MCF 10A (cell line): ENCODE measurements at regions of chr20 and their contacts with region 1.

Region 1: DNA sequence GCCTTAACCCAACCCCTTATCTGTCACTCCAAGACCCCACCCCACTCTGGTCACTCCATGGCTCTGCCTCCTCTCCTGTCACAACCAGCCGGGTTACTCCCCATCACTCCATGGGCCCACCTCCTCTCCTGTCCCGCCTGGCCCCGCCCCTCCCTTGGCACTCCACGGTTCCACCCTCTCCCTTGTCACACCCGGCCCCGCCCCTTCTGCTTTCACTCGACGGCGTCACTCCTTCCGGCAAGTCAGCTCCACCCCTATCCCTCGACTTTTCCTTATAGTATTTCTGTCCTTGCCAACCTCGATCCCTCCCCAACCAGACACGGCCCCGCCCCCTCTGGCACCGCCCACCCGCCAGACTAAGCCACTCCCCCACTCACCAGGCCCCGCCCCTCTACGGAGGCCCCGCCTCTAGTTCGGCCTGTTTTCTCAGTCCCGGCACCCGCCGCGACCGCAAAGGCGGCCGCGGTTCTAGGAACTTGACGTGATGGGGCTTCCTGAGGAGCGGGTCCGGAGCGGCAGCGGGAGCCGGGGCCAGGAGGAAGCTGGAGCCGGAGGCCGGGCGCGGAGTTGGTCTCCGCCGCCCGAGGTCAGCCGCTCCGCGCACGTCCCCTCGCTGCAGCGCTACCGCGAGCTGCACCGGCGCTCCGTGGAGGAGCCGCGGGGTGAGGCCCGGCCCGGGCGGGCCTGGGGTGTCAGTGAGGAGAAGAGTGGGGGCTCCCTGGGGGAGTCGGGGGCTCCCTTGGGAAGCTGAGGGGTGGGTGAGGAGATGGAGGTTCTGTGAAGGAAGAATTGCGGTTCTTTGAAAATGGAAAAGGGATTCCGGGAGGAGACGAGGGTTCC is at the start of gene ACSS2:
- DNase-seq: peak; percentile 100
- H3K4me3 Mint-ChIP-seq: peak within 1 kb of the TSS; percentile 99
- H3K27ac Mint-ChIP-seq: peak within 1 kb of the TSS; percentile 91
- H3K4me1 Mint-ChIP-seq: peaks cover 51% of the 10 kb centered on the region
- H3K27me3 Mint-ChIP-seq: no peaks in the 10 kb centered on the region
- CTCF ChIP-seq: no peak
- total RNA-seq, gene ACSS2: 36.6 and 42.0 TPM in 2 replicates

Region 2: DNA sequence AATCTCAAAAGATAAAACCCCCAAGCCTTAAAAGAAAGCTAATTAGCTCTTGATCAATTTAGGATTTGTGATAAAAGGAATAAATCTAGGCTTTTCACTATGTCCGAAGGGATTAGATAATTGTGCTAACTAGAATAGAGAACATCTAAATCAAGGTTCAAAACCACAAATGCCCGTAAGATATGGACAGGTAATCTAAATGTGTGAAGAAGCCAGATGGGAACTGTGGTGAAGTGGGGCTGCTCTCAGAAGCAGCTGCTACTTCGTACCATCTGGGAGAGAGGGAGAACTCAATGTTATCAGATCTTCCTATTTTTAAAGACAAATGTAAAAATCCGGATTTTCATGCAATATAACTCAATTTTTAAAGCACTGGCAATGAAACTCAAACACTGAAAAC is 95.2 kb before region 1 on chr20:
- CTCF ChIA-PET with region 1: no interaction called
- POLR2A ChIA-PET with region 1: no interaction called
- intact Hi-C with region 1: no loop called
- DNase-seq: no peak
- H3K4me3 Mint-ChIP-seq: no peak overlapping the region
- H3K27ac Mint-ChIP-seq: no peak overlapping the region
- H3K4me1 Mint-ChIP-seq: no peaks in the 10 kb centered on the region
- H3K27me3 Mint-ChIP-seq: no peaks in the 10 kb centered on the region
- CTCF ChIP-seq: no peak

Region 3: DNA sequence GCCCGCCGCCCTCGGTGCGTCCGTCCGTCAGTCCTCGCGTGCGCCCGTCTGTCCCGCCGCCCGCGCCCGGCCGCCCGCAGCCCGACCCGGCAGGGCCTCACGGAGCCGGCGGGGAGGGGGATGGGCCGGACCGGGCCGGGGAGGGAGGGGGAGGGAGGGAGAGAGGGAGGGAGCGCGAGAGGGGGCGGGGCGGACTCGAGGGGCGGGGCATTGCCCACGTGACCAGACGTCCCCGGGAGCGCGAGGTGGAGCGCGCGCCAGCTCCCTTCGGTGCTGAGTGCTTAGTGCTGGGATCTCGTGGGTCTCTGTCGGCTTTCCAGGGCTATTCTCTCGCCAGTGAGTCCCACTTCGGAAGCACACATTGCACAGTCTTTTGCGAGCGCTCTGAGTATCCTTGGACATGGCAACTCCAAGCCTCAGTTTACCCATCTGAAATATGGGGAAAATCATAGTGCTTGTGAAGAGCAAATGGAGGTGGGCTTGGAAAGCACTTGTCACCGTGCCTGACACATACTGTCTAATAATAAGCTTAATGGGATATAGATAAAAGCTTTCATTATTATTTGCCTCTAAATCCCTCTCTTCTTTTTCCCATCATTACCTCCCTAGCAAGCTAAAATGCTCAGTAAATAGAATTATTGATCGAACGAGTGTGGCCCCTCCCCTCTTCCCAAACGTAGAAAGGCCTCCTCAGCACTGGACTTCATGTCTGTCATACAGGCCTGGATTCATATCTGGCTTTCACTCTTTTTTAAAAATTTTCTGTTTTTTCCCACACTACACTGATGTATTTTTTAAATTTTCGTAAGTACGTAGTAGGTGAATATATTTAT is 50.6 kb before region 1 on chr20 and contains the start of gene NCOA6:
- CTCF ChIA-PET with region 1: interaction called, 4 read pairs
- POLR2A ChIA-PET with region 1: interaction called, 12 read pairs
- intact Hi-C with region 1: no loop called
- DNase-seq: peak; percentile 78
- H3K4me3 Mint-ChIP-seq: peak within 1 kb of the TSS; percentile 97
- H3K27ac Mint-ChIP-seq: peak within 1 kb of the TSS; percentile 88
- H3K4me1 Mint-ChIP-seq: peaks cover 24% of the 10 kb centered on the region
- H3K27me3 Mint-ChIP-seq: peaks cover 22% of the 10 kb centered on the region
- CTCF ChIP-seq: no peak
- total RNA-seq, gene NCOA6: 25.7 and 27.9 TPM in 2 replicates

Region 4: GRCh38 chr20:34861386-34862084 is 14.8 kb before region 1 on chr20:
- CTCF ChIA-PET with region 1: interaction called, 51 read pairs
- POLR2A ChIA-PET with region 1: interaction called, 4 read pairs
- intact Hi-C with region 1: no loop called
- DNase-seq: no peak
- H3K4me3 Mint-ChIP-seq: no peak overlapping the region
- H3K27ac Mint-ChIP-seq: no peak overlapping the region
- H3K4me1 Mint-ChIP-seq: no peaks in the 10 kb centered on the region
- H3K27me3 Mint-ChIP-seq: no peaks in the 10 kb centered on the region
- CTCF ChIP-seq: no peak

Region 5: DNA sequence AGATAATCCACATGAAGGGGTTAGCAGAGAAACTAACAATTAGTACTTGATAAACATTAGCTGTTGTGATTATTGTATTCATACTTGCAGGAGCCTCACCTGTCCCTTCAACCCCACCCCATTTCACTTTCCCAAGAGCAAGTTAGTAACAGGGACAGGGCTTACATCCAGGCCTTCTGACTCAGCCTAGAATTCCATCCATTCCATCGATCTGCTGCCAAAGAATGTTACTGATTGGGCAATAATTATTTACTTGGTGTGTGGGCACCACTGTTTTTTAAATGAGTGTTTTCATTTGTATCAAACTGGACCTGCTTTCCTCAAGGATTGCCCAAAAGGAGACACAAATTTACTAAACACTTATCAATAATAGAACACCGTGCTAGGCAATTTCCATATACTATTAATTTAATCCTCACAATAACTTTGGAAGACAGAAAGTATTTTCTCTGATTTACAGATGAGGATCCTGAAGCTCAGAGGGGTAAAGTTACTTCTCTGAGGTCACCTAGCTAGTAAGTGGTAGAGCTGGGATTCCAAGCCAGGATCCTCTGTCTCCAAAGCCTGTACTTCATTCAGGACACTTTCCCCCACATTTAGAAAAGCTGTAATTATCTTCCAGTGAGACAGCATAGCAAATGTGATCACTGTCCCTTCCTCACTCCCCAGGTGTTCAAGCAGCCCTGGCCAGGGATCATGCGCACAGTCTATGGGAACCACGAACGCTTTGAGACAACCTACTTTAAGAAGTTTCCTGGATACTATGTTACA is 46.5 kb after region 1 on chr20:
- CTCF ChIA-PET with region 1: interaction called, 21 read pairs
- POLR2A ChIA-PET with region 1: interaction called, 51 read pairs
- intact Hi-C with region 1: no loop called
- DNase-seq: peak; percentile 93
- H3K4me3 Mint-ChIP-seq: no peak overlapping the region
- H3K27ac Mint-ChIP-seq: no peak overlapping the region
- H3K4me1 Mint-ChIP-seq: peaks cover 34% of the 10 kb centered on the region
- H3K27me3 Mint-ChIP-seq: no peaks in the 10 kb centered on the region
- CTCF ChIP-seq: no peak

Region 6: DNA sequence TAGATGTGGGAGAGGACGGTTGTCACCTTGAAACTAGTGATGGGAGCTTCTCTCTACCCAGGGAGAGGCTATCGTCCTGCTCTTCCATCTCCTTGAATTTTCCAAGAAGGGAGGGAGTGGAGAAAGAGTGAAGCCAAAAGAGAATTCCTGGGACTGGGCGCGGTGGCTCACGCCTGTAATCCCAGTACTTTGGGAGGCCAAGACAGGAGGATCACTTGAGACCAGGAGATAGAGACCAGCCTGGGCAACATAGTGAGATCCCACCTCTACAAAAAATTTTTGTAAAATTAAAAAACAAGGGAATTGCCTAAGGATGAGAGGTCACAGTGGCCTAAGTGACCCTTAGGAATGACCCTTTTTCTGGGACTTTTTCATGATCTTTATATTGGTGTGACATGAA is 88.1 kb after region 1 on chr20:
- CTCF ChIA-PET with region 1: interaction called, 279 read pairs
- POLR2A ChIA-PET with region 1: interaction called, 116 read pairs
- intact Hi-C with region 1: loop called (anchors 1 kb)
- DNase-seq: no peak
- H3K4me3 Mint-ChIP-seq: no peak overlapping the region
- H3K27ac Mint-ChIP-seq: no peak overlapping the region
- H3K4me1 Mint-ChIP-seq: no peaks in the 10 kb centered on the region
- H3K27me3 Mint-ChIP-seq: no peaks in the 10 kb centered on the region
- CTCF ChIP-seq: no peak

Region 7: GRCh38 chr20:35200255-35200654 is 323.9 kb after region 1 on chr20:
- CTCF ChIA-PET with region 1: interaction called, 3 read pairs
- POLR2A ChIA-PET with region 1: no interaction called
- intact Hi-C with region 1: loop called (anchors 2 kb)
- DNase-seq: peak; percentile 80
- H3K4me3 Mint-ChIP-seq: no peak overlapping the region
- H3K27ac Mint-ChIP-seq: peak overlapping the region; percentile 4
- H3K4me1 Mint-ChIP-seq: peaks cover 9% of the 10 kb centered on the region
- H3K27me3 Mint-ChIP-seq: no peaks in the 10 kb centered on the region
- CTCF ChIP-seq: no peak